ENCODE measurements at regions of chr17 and their contacts with region 1.

Region 1: DNA sequence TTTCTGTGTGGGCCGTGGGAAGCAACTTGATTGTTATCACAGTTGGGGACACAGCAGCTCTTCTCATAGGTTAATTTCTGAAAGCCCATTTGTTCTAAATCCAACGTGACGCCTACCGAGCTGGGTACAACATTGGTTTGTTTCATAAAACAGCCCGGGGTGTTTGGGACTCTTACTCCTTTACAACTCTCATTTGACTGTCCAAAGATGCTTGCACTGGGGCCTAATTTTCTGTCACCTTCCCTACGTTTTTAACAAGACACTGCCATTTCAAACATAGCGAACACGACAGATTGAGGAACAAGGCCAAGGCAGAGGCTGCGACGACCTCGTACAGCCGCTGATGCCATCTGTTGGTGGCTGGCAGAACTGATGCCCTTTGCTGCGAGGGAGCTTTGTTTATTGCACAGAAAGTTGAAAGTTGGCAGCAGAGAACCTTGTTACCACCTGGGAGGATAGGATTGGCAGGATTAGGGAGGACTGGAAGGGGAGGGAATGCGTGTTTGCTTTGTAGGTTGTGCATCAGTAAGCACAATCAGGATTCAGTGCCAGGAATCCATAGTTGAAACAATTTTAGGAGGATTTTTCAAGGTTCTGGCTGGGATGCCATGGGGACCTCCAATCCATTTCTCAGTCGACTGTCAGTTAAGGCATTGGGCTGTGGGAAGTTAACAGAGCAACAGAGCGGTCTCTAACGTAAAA is 98.3 kb downstream of the PITPNC1 start:
- DNase-seq: no peak
- H3K4me3 ChIP-seq: no peak overlapping the region
- CTCF ChIP-seq: peak; percentile 95

Region 2: GRCh38 chr17:67390646-67391384 is 84.6 kb before region 1 on chr17:
- CTCF ChIA-PET with region 1: interaction called, 27 read pairs
- POLR2A ChIA-PET with region 1: no interaction called
- DNase-seq: peak; percentile 91
- H3K4me3 ChIP-seq: peak overlapping the region; percentile 15; the same call in 1 of the 2 replicates
- CTCF ChIP-seq: no peak

Region 3: GRCh38 chr17:67431249-67432048 is 43.9 kb before region 1 on chr17:
- CTCF ChIA-PET with region 1: interaction called, 18 read pairs
- POLR2A ChIA-PET with region 1: no interaction called
- DNase-seq: no peak
- H3K4me3 ChIP-seq: no peak overlapping the region
- CTCF ChIP-seq: no peak

Region 4: DNA sequence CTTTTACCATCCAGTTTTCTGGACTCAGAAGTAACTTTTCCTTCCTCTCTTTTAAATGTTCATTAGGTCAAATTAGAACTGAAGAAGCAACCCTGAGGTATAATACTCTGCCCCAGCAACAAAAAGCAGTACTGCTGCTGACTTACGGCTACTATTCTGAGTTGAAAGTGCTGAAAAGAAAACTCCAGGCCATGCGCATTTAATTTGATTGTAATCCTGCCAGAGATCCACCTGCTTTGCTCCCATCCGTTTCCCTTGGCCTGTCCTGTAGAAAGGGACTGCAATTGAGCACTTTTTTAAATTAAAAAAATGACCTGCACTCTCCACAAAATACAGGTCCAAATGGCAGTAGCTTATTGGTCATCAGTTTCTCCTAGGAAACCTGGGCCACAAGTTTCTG is 36.7 kb before region 1 on chr17:
- CTCF ChIA-PET with region 1: interaction called, 18 read pairs
- POLR2A ChIA-PET with region 1: no interaction called
- DNase-seq: no peak
- H3K4me3 ChIP-seq: no peak overlapping the region
- CTCF ChIP-seq: no peak

Region 5: GRCh38 chr17:67461228-67461780 is 14.1 kb before region 1 on chr17:
- CTCF ChIA-PET with region 1: interaction called, 26 read pairs
- POLR2A ChIA-PET with region 1: no interaction called
- DNase-seq: no peak
- H3K4me3 ChIP-seq: no peak overlapping the region
- CTCF ChIP-seq: no peak

Region 6: GRCh38 chr17:67500261-67500660 is 24.9 kb after region 1 on chr17:
- CTCF ChIA-PET with region 1: interaction called, 10 read pairs
- POLR2A ChIA-PET with region 1: interaction called, 3 read pairs
- DNase-seq: no peak
- H3K4me3 ChIP-seq: no peak overlapping the region
- CTCF ChIP-seq: no peak